ENCODE measurements at regions of chr7 and their contacts with region 1.

Region 1: GRCh38 chr7:5363729-5364128 is 59.9 kb downstream of the TNRC18 start:
- DNase-seq: no peak
- H3K4me3 ChIP-seq: no peak overlapping the region
- H3K27ac ChIP-seq: no peak overlapping the region
- H3K4me1 ChIP-seq: 0 out of 2 replicates have a peak, but pooled peaks cover 5% of the 10 kb centered on the region
- H3K27me3 ChIP-seq: no peaks in the 10 kb centered on the region
- CTCF ChIP-seq: no peak

Region 2: GRCh38 chr7:5243261-5243660 is 120.5 kb before region 1 on chr7:
- CTCF ChIA-PET with region 1: interaction called, 6 read pairs
- POLR2A ChIA-PET with region 1: no interaction called
- intact Hi-C with region 1: loop called (anchors 5 kb)
- DNase-seq: no peak
- H3K4me3 ChIP-seq: no peak overlapping the region
- H3K27ac ChIP-seq: no peak overlapping the region
- H3K4me1 ChIP-seq: peaks cover 17% of the 10 kb centered on the region
- H3K27me3 ChIP-seq: no peaks in the 10 kb centered on the region
- CTCF ChIP-seq: no peak

Region 3: DNA sequence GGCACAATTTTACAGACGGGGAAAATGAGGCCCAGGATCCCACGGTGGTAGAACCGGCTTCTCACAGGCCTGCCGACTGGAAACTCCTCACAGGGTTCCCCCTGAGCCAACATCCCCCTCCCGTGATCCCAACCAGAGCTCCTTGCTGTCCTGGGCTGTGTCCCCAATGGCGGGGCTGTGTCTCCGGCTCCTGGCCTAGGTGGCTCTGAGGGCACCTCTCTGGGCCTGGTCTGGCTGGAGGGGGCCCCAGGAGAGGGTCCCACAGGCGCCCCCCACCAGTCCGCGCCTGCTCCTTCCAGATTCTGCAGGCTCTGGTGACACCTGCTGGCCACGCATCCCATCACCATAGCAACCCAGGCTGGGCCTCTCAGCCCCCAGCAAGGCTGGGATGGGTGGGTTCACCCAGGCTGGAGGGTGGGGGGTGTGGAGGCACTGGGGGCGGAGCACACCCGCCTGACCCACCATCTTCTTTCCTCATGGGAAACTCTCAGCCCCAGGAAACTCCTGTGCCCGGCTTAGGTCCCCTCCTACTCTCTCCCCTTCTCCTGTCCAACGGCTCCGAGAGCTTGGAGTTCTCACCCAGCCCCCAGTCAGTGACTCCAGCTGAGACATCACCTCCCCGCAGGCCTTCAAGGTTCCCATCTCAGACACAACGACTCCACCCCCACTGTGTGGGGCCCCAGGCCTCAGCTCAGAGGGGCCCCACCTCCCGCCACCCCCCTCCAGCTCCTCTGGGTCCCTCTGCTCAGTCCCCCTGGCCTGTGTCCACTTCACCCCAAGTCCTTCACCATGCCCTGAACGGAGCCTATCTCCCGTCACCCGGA is 87.0 kb after region 1 on chr7:
- CTCF ChIA-PET with region 1: no interaction called
- POLR2A ChIA-PET with region 1: no interaction called
- intact Hi-C with region 1: loop called (anchors 1 kb)
- DNase-seq: peak in 1 of 2 experiments; percentile 25
- H3K4me3 ChIP-seq: no peak overlapping the region
- H3K27ac ChIP-seq: no peak overlapping the region
- H3K4me1 ChIP-seq: no peaks in the 10 kb centered on the region
- H3K27me3 ChIP-seq: no peaks in the 10 kb centered on the region
- CTCF ChIP-seq: peak; percentile 69

Region 4: DNA sequence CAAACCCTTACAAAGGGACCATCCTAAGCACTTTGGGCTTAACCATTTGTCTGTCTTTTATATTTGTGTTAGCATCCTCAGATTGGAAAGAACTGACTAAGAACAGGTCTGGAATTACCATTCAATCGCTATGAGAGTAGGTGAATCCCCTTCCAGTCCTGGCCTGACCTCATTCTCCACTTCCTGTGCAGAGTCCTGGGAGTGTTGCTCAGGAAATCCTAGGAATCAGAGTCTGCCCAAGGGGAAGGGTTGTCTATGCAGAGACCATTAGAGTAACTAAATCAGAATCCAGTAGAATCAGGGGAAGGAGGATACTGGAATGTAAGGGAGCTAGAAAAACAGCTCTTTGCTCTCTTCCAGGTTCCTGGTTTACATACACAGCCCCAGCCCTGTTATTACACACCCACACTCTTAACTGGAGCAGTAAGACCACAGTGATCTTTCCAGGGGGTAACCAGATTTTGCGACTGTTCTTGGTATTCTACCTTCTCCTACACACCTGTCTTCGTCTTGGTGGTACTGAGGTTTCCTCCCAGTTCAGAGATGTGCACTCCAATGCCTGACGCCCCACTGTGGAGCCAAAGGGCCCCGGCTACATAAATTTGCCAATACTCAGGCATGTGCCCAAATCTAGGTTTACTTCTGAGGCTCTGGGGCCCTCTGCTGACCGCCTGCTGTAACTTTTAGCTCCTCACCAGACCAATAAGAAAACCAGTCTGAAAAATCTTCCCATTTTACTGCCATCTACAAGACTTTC is 314.0 kb after region 1 on chr7:
- CTCF ChIA-PET with region 1: no interaction called
- POLR2A ChIA-PET with region 1: no interaction called
- intact Hi-C with region 1: loop called (anchors 5 kb)
- DNase-seq: peak; percentile 62 to 69
- H3K4me3 ChIP-seq: no peak overlapping the region
- H3K27ac ChIP-seq: no peak overlapping the region
- H3K4me1 ChIP-seq: no peaks in the 10 kb centered on the region
- H3K27me3 ChIP-seq: no peaks in the 10 kb centered on the region
- CTCF ChIP-seq: peak; percentile 87

Region 5: GRCh38 chr7:5704534-5704922 is 340.8 kb after region 1 on chr7:
- CTCF ChIA-PET with region 1: no interaction called
- POLR2A ChIA-PET with region 1: no interaction called
- intact Hi-C with region 1: loop called (anchors 1 kb)
- DNase-seq: peak; percentile 66 to 76
- H3K4me3 ChIP-seq: no peak overlapping the region
- H3K27ac ChIP-seq: no peak overlapping the region
- H3K4me1 ChIP-seq: peaks cover 8% of the 10 kb centered on the region
- H3K27me3 ChIP-seq: no peaks in the 10 kb centered on the region
- CTCF ChIP-seq: peak; percentile 95

Region 6: DNA sequence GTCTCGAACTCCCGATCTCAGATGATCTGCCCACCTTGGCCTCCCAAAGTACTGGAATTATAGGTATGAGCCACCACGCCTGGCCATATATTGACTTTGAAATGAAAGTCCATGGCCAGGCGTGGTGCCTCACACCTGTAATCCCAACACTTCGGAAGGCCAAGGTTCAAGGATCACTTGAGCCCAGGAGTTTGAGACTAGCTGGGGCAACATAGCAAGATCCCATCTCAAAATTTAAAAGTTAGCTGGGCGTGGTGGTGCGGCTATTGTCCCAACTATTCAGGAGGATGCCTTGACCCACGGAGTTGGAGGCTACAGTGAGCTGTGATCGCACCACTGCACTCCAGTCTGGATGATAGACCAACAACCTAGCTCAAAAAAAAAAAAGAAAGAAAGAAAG is 528.8 kb after region 1 on chr7:
- CTCF ChIA-PET with region 1: no interaction called
- POLR2A ChIA-PET with region 1: no interaction called
- intact Hi-C with region 1: no loop called
- DNase-seq: no peak
- H3K4me3 ChIP-seq: no peak overlapping the region
- H3K27ac ChIP-seq: no peak overlapping the region
- H3K4me1 ChIP-seq: no peaks in the 10 kb centered on the region; the same call in 1 of the 2 replicates
- H3K27me3 ChIP-seq: no peaks in the 10 kb centered on the region
- CTCF ChIP-seq: no peak

Measured in PC-9 (cell line).